CD8-positive, alpha-beta T cell (primary cell): ENCODE measurements at regions of chr21 and their contacts with region 1.

Region 1: GRCh38 chr21:42593007-42593806 is 60.2 kb upstream of the PDE9A start:
- DNase-seq: peak; percentile 41 to 85 (median 67)
- ATAC-seq: peak; percentile 84
- H3K4me3 ChIP-seq: no peak overlapping the region
- H3K4me3 Mint-ChIP-seq: no peak overlapping the region
- H3K27ac ChIP-seq: no peak overlapping the region
- H3K27ac Mint-ChIP-seq: no peak overlapping the region
- H3K4me1 ChIP-seq: peaks cover 14% of the 10 kb centered on the region
- H3K4me1 Mint-ChIP-seq: peaks cover 14% of the 10 kb centered on the region
- H3K27me3 ChIP-seq: peaks cover 0 to 3% of the 10 kb centered on the region in 2 experiments
- H3K27me3 Mint-ChIP-seq: no peaks in the 10 kb centered on the region
- CTCF ChIP-seq: peak; percentile 88

Region 2: DNA sequence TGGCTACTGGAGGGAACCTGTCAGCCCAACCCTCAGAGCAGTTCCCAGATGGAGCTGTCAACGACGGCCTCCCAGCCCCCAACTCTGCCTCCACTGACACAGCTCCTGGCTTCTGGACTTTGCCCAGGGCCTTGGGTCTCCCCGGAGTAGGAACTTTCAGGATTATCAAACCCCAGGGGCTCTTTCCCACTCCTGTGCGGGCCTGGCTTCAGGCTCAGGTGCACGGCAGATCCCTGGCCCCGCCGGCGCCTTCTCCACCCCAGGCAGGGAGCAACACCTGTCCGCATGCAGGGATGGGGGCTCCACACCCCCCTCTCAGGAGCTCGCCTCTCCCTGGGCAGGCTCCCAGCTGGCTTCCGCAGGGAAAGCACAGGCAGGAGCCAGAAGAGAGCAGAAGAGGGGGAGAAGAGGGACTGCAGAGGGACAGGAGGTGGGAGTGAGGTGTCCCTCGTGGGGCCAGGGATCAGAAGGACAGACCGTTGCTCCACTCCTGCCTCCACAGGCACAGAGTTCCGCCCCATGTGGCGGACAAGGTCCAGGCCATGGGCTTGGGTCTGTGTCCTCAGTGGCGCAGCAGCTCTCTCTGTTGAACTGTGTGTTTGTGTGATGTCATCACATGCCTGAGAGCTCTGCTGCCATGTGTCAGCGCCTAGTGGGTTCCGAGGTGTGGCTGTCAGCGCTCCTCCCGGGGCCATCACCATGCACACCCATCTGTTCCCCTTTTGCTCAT is 167.9 kb after region 1 on chr21:
- CTCF ChIA-PET with region 1: no interaction called
- POLR2A ChIA-PET with region 1: no interaction called
- intact Hi-C with region 1: no loop called
- DNase-seq: no peak
- ATAC-seq: no peak
- H3K4me3 ChIP-seq: no peak overlapping the region
- H3K4me3 Mint-ChIP-seq: no peak overlapping the region
- H3K27ac ChIP-seq: no peak overlapping the region
- H3K27ac Mint-ChIP-seq: no peak overlapping the region
- H3K4me1 ChIP-seq: no peaks in the 10 kb centered on the region
- H3K4me1 Mint-ChIP-seq: no peaks in the 10 kb centered on the region
- H3K27me3 ChIP-seq: peaks cover 0 to 3% of the 10 kb centered on the region in 2 experiments
- H3K27me3 Mint-ChIP-seq: no peaks in the 10 kb centered on the region
- CTCF ChIP-seq: no peak

Region 3: GRCh38 chr21:42809171-42809928 is 216.1 kb after region 1 on chr21:
- CTCF ChIA-PET with region 1: interaction called, 17 read pairs
- POLR2A ChIA-PET with region 1: no interaction called
- intact Hi-C with region 1: no loop called
- DNase-seq: peak in 1 of 9 experiments; percentile 23
- ATAC-seq: no peak
- H3K4me3 ChIP-seq: no peak overlapping the region
- H3K4me3 Mint-ChIP-seq: no peak overlapping the region
- H3K27ac ChIP-seq: no peak overlapping the region
- H3K27ac Mint-ChIP-seq: no peak overlapping the region
- H3K4me1 ChIP-seq: no peaks in the 10 kb centered on the region
- H3K4me1 Mint-ChIP-seq: no peaks in the 10 kb centered on the region
- H3K27me3 ChIP-seq: no peaks in the 10 kb centered on the region
- H3K27me3 Mint-ChIP-seq: no peaks in the 10 kb centered on the region
- CTCF ChIP-seq: no peak

Region 4: GRCh38 chr21:42833439-42833815 is 240.2 kb after region 1 on chr21:
- CTCF ChIA-PET with region 1: interaction called, 9 read pairs
- POLR2A ChIA-PET with region 1: no interaction called
- intact Hi-C with region 1: loop called in 1 of 2 experiments (anchors 5 kb)
- DNase-seq: peak in 7 of 9 experiments; percentile 31 to 70 (median 59)
- ATAC-seq: peak; percentile 75
- H3K4me3 ChIP-seq: peak overlapping the region in 1 of 2 experiments; percentile 22
- H3K4me3 Mint-ChIP-seq: peak overlapping the region; percentile 68
- H3K27ac ChIP-seq: no peak overlapping the region
- H3K27ac Mint-ChIP-seq: no peak overlapping the region
- H3K4me1 ChIP-seq: peaks cover 29% of the 10 kb centered on the region
- H3K4me1 Mint-ChIP-seq: peaks cover 34% of the 10 kb centered on the region
- H3K27me3 ChIP-seq: peaks cover 0 to 4% of the 10 kb centered on the region in 2 experiments
- H3K27me3 Mint-ChIP-seq: no peaks in the 10 kb centered on the region
- CTCF ChIP-seq: peak; percentile 38